Right cardiac atrium (tissue), 5 donors: ENCODE measurements at regions of chr17 and their contacts with region 1.

Region 1: GRCh38 chr17:31842183-31843069 is 16.6 kb downstream of the COPRS start:
- DNase-seq: peak; percentile 66 to 82 (median 78)
- ATAC-seq: peak; percentile 88 to 92
- H3K4me3 ChIP-seq: peak overlapping the region; percentile 41
- H3K27ac ChIP-seq: peak overlapping the region; percentile 10
- H3K4me1 ChIP-seq: peaks cover 3% of the 10 kb centered on the region
- H3K27me3 ChIP-seq: no peaks in the 10 kb centered on the region

Region 2: GRCh38 chr17:31433091-31433790 is 409.2 kb before region 1 on chr17:
- intact Hi-C with region 1: loop called in 2 of 4 experiments (anchors 5 to 10 kb)
- DNase-seq: no peak
- ATAC-seq: no peak
- H3K4me3 ChIP-seq: no peak overlapping the region
- H3K27ac ChIP-seq: no peak overlapping the region
- H3K4me1 ChIP-seq: no peaks in the 10 kb centered on the region
- H3K27me3 ChIP-seq: no peaks in the 10 kb centered on the region

Region 3: GRCh38 chr17:31558748-31559644 is 283.4 kb before region 1 on chr17:
- intact Hi-C with region 1: loop called (anchors 2 to 5 kb)
- DNase-seq: peak; percentile 85 to 92 (median 91)
- ATAC-seq: peak; percentile 89 to 90
- H3K4me3 ChIP-seq: peak overlapping the region; percentile 90
- H3K27ac ChIP-seq: peak overlapping the region; percentile 99
- H3K4me1 ChIP-seq: peaks cover 3% of the 10 kb centered on the region
- H3K27me3 ChIP-seq: no peaks in the 10 kb centered on the region

Region 4: DNA sequence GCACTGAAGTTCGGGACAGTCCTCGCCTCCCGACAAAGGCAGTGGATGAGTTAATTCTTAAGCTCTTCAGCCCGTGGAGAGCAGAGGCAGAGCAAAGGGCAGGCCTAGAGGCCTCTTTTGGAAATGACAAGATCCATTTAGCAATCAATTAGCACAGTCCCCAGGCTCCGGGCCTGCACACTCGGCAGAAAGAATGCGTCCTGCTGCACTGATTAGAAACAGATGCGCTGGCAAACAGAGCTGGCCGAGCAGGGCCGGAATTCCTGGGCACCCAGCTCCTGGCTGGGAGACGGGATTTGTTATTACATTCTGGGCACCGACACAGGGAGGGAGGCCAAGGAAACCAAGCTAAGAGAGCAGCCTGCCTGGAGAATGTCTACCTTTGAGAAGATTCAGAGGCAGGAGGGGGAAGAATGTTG is 146.2 kb before region 1 on chr17:
- intact Hi-C with region 1: loop called in 1 of 4 experiments (anchors 10 kb)
- DNase-seq: peak; percentile 87 to 94 (median 92)
- ATAC-seq: peak; percentile 90 to 91
- H3K4me3 ChIP-seq: no peak overlapping the region
- H3K27ac ChIP-seq: peak overlapping the region; percentile 84
- H3K4me1 ChIP-seq: peaks cover 8% of the 10 kb centered on the region
- H3K27me3 ChIP-seq: no peaks in the 10 kb centered on the region

Region 5: GRCh38 chr17:32152130-32152529 is 309.7 kb after region 1 on chr17:
- intact Hi-C with region 1: no loop called
- DNase-seq: peak in 1 of 3 donors; percentile 67
- ATAC-seq: peak; percentile 88 to 91
- H3K4me3 ChIP-seq: no peak overlapping the region
- H3K27ac ChIP-seq: no peak overlapping the region
- H3K4me1 ChIP-seq: peaks cover 7% of the 10 kb centered on the region
- H3K27me3 ChIP-seq: no peaks in the 10 kb centered on the region